GM12878 (cell line): ENCODE measurements at regions of chr1 and their contacts with region 1.

Region 1: GRCh38 chr1:40363721-40364120 is 9.8 kb upstream of the SMAP2 start:
- DNase-seq: no peak
- ATAC-seq: peak; percentile 100
- H3K4me3 ChIP-seq: no peak overlapping the region
- H3K27ac ChIP-seq: no peak overlapping the region
- H3K4me1 ChIP-seq: no peaks in the 10 kb centered on the region; the same call in 1 of the 2 replicates
- H3K27me3 ChIP-seq: no peaks in the 10 kb centered on the region
- CTCF ChIP-seq: peak; percentile 28 to 43 (median 36); a peak in 4 of 6 replicates
- EP300 ChIP-seq: no peak
- POLR2A ChIP-seq: no peak
- RAD21 ChIP-seq: peak; percentile 32

Region 2: DNA sequence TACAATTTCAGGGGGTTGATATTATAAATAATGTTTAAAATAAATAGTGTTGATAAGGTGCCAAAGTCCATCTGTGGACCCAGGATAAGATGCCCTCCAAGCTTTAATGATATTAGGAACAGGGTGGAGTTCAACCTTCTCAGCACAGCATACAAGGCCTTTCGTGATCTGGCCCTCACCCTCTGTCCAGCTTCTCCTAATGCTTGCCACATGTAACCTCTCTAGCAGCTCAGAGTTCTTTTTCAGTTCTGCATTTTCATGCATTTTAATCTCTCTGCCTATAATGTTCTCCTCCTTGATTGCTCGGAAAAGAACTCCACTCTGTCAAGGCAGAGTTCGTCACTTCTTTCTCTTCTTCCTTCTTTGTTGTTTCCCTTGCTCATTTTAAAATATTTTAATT is 11.6 kb before region 1 on chr1:
- CTCF ChIA-PET with region 1: interaction called, 13 read pairs
- POLR2A ChIA-PET with region 1: interaction called, 5 read pairs
- RAD21 ChIA-PET with region 1: interaction called, 8 read pairs
- SMC1A ChIA-PET with region 1: interaction called, 17 read pairs
- in situ Hi-C with region 1: no loop called
- intact Hi-C with region 1: no loop called
- DNase-seq: no peak
- ATAC-seq: peak; percentile 94
- H3K4me3 ChIP-seq: no peak overlapping the region
- H3K27ac ChIP-seq: no peak overlapping the region; the same call in 1 of the 2 replicates
- H3K4me1 ChIP-seq: peaks cover 13% of the 10 kb centered on the region
- H3K27me3 ChIP-seq: no peaks in the 10 kb centered on the region
- CTCF ChIP-seq: no peak
- EP300 ChIP-seq: no peak
- POLR2A ChIP-seq: no peak
- RAD21 ChIP-seq: no peak

Region 3: DNA sequence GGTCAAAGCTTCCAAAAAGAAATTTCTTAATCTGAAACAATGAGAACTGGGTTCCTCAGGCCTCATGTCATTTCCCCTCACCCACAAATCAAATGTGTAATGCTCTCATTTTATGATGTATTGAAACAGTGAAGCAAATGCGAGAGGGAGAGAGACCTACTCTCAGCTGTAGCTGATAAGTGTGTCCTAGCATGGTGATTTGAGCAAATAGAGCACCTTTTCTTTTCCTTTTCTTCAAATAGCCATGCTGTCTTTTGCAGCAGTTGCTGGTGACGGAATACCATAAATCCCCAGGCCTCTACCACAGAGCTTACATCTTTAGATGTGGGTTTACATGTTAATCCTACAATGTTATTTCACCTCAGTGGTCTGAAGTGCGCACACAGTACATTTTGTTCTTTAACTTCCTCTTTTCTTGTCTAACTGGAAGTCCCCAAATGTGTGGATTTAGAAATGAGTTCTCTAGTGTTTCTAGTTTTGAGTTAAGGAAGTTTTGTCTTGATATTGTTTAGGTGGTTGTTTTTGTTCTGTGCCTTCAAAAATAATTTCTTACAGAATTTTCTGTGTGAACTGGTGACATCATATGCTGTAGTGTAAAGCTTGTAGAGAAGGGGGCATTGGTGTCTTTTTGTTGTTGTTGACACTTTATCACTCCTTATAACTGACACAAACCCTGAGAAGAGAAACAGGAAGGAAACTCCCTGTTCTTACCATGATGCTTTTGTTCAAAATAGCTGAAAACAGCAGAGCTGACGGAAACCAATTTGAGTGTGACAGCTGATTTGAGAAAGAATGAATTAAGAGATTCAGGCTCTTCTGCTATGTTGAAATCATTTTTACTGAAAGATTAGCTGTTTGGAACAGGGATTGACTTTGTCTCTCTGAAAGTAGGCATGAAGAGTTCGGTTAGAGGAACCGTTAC is 22.0 kb after region 1 on chr1:
- CTCF ChIA-PET with region 1: interaction called, 10 read pairs
- POLR2A ChIA-PET with region 1: interaction called, 15 read pairs
- RAD21 ChIA-PET with region 1: interaction called, 20 read pairs
- SMC1A ChIA-PET with region 1: interaction called, 35 read pairs
- in situ Hi-C with region 1: no loop called
- intact Hi-C with region 1: no loop called
- DNase-seq: peak; percentile 98
- ATAC-seq: peak; percentile 72
- H3K4me3 ChIP-seq: peak overlapping the region; percentile 66
- H3K27ac ChIP-seq: peak overlapping the region; percentile 97
- H3K4me1 ChIP-seq: peaks cover 65% of the 10 kb centered on the region
- H3K27me3 ChIP-seq: no peaks in the 10 kb centered on the region
- CTCF ChIP-seq: no peak
- EP300 ChIP-seq: peak; percentile 98 to 99
- POLR2A ChIP-seq: no peak
- RAD21 ChIP-seq: peak; percentile 15; the same call in 1 of the 2 replicates